ENCODE measurements at regions of chr17 and their contacts with region 1.

Region 1: GRCh38 chr17:4412933-4413831 is 20.6 kb upstream of the SPNS3 start:
- DNase-seq: peak; percentile 89 to 97 (median 94)
- H3K4me3 ChIP-seq: no peak overlapping the region
- H3K27ac ChIP-seq: no peak overlapping the region
- H3K4me1 ChIP-seq: no peaks in the 10 kb centered on the region
- H3K27me3 ChIP-seq: no peaks in the 10 kb centered on the region
- CTCF ChIP-seq: peak; percentile 87 to 98 (median 93)
- POLR2A ChIP-seq: no peak

Region 2: DNA sequence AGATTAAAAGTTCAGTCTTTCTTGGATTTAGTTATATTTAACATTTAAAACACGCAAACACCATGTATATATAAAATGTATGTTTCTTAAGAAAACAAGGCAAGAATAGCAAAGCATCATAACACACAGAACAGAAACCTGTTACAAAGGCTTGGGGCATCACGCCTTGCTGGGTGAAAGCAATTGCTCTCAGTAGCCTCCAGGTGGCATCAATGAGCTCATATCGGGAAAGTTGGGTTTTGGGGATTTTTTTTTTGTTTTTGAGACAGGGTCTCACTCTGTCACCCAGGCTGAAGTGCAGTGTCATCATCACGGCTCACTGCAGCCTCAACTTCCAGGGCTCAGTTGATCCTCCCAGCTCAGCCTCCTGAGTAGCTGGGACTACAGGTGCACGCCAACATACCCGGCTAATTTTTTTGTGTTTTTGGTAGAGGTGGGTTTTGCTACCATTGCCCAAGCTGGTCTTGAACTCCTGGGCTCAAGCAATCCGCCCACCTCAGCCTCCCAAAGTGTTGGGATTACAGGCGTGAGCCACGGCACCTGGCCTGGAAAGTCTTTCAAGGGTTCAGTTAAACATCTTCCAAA is 213.3 kb before region 1 on chr17:
- intact Hi-C with region 1: loop called in 1 of 2 experiments (anchors 5 kb)
- DNase-seq: peak in 2 of 7 donors; percentile 42 to 59
- H3K4me3 ChIP-seq: no peak overlapping the region
- H3K27ac ChIP-seq: no peak overlapping the region
- H3K4me1 ChIP-seq: peaks cover 10 to 13% of the 10 kb centered on the region in 2 donors
- H3K27me3 ChIP-seq: no peaks in the 10 kb centered on the region
- CTCF ChIP-seq: peak; percentile 42 to 81 (median 63)
- POLR2A ChIP-seq: no peak

Region 3: GRCh38 chr17:4215882-4216570 is 197.2 kb before region 1 on chr17:
- intact Hi-C with region 1: loop called (anchors 5 to 10 kb)
- DNase-seq: no peak
- H3K4me3 ChIP-seq: no peak overlapping the region
- H3K27ac ChIP-seq: no peak overlapping the region
- H3K4me1 ChIP-seq: peaks cover 10 to 32% of the 10 kb centered on the region in 2 donors
- H3K27me3 ChIP-seq: no peaks in the 10 kb centered on the region
- CTCF ChIP-seq: no peak
- POLR2A ChIP-seq: no peak

Measured in adrenal gland (tissue), 19 donors.